Activated T-helper 2 cell treated with anti-CD3 and anti-CD28 coated beads, Interferon-gamma antibody, Interleukin-2, Interleukin-4, amounts not matched to agents 10 μg/mL and 5 μg/mL and 100 μg/mL, durations not matched to agents 14 hours and 24 hours and 36 hours (primary cell): ENCODE measurements at regions of chr10 and their contacts with region 1.

Region 1: DNA sequence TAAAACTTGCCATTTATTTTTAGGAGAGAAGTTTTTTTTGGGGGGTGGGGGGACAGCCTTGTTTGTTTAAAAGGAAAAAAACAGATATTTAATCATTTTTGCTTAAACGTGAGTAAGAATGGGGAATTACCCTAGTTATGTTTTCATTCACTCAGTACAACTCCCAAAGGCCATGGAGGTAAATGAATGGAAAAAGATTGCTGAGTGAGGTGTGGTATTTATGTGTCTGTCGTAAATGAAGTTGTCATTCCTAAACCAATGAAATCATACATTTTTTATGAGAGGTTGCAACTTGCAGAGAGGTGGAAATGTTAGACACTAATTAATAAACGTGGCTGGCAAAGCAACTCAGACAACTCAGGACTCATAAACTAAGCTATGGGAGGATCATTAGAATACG is 218.1 kb downstream of the CELF2 start:
- DNase-seq: no peak
- H3K4me3 Mint-ChIP-seq: peak overlapping the region; percentile 58
- H3K27ac Mint-ChIP-seq: peak overlapping the region; percentile 98
- H3K4me1 Mint-ChIP-seq: peaks cover 84% of the 10 kb centered on the region
- H3K27me3 Mint-ChIP-seq: no peaks in the 10 kb centered on the region

Region 2: DNA sequence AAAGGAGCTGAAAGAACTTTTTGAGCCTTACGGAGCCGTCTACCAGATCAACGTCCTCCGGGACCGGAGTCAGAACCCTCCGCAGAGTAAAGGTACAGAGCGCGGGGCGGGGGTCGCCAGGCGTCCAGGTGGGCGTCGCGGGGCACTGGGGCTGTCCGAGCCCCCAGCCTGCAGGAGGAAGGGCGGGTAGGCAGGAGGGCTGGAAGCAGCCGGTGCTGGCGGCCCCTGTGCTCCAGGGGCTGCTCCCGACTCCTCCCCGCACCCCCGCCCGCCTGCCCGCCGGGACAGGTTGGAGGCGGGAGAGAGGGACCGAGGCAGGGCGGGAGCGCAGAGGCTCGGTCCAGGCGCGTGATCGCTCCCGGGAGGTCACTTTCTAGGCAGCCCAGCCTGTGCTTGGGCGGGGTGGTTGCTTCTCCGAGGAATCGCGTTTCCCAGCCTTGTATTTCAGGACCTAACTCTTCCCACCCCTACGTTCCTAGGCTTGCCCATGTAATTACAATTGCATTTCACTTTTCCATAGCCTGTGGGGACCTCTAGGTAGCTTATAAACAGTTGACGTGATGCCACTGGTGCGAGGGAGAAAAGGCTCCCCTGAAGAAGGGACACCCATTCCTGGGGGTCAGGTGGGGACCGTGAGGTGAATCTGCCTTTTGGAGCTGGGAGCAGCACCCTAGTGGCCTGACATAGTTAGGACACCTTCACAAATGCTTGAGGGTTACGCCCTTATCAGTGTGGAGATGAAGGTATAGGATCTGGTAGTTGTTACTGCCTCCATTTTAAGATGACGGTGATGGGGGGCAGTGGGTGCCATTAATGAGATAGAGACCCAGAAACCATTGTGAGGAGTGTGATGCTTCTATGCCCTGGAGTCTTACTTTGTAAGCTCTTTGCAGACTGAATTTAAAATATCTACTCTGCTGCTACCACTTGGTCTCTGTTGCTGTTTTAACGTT is 69.9 kb before region 1 on chr10:
- intact Hi-C with region 1: loop called (anchors 1 kb)
- DNase-seq: peak; percentile 73
- H3K4me3 Mint-ChIP-seq: peak overlapping the region; percentile 98
- H3K27ac Mint-ChIP-seq: peak overlapping the region; percentile 98
- H3K4me1 Mint-ChIP-seq: peaks cover 37% of the 10 kb centered on the region
- H3K27me3 Mint-ChIP-seq: no peaks in the 10 kb centered on the region

Region 3: GRCh38 chr10:11170993-11171851 is 64.5 kb before region 1 on chr10:
- intact Hi-C with region 1: loop called (anchors 1 kb)
- DNase-seq: no peak
- H3K4me3 Mint-ChIP-seq: no peak overlapping the region
- H3K27ac Mint-ChIP-seq: no peak overlapping the region
- H3K4me1 Mint-ChIP-seq: peaks cover 46% of the 10 kb centered on the region
- H3K27me3 Mint-ChIP-seq: no peaks in the 10 kb centered on the region

Region 4: DNA sequence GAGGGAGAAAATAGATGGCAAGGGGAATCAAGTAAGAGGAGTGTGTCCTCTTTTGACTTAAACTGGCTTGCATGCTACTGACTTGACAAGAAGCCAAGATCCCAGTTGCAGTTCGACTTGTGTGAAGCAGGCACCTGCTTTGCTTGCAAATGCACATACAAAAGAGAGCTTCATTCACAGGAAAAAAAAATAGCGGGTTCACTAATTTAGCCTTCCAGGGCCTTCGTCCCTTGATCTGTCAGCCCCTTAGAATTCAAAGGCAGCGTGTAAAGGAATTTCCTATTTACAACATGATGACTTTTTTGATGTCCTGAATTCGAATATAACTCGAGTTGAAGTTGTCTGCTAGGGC is 26.0 kb before region 1 on chr10:
- intact Hi-C with region 1: loop called (anchors 1 kb)
- DNase-seq: no peak
- H3K4me3 Mint-ChIP-seq: peak overlapping the region; percentile 79
- H3K27ac Mint-ChIP-seq: peak overlapping the region; percentile 99
- H3K4me1 Mint-ChIP-seq: peaks cover 90% of the 10 kb centered on the region
- H3K27me3 Mint-ChIP-seq: no peaks in the 10 kb centered on the region

Region 5: GRCh38 chr10:11218395-11218794 is 17.4 kb before region 1 on chr10:
- intact Hi-C with region 1: loop called (anchors 2 kb)
- DNase-seq: no peak
- H3K4me3 Mint-ChIP-seq: peak overlapping the region; percentile 27
- H3K27ac Mint-ChIP-seq: peak overlapping the region; percentile 89
- H3K4me1 Mint-ChIP-seq: peaks cover 78% of the 10 kb centered on the region
- H3K27me3 Mint-ChIP-seq: no peaks in the 10 kb centered on the region

Region 6: GRCh38 chr10:11270135-11270857 is 34.5 kb after region 1 on chr10:
- intact Hi-C with region 1: loop called (anchors 2 kb)
- DNase-seq: peak; percentile 45
- H3K4me3 Mint-ChIP-seq: no peak overlapping the region
- H3K27ac Mint-ChIP-seq: peak overlapping the region; percentile 73
- H3K4me1 Mint-ChIP-seq: peaks cover 64% of the 10 kb centered on the region
- H3K27me3 Mint-ChIP-seq: no peaks in the 10 kb centered on the region